Vagina (tissue), 2 donors: ENCODE measurements at regions of chr10 and their contacts with region 1.

Region 1: GRCh38 chr10:78819361-78820006 is 249.3 kb upstream of the ZMIZ1 start:
- DNase-seq: no peak
- H3K4me3 ChIP-seq: no peak overlapping the region
- H3K27ac ChIP-seq: no peak overlapping the region
- H3K4me1 ChIP-seq: peaks cover 10% of the 10 kb centered on the region
- H3K27me3 ChIP-seq: no peaks in the 10 kb centered on the region
- CTCF ChIP-seq: no peak
- POLR2A ChIP-seq: no peak

Region 2: GRCh38 chr10:78852466-78853240 is 33.2 kb after region 1 on chr10:
- intact Hi-C with region 1: loop called (anchors 2 kb)
- DNase-seq: no peak
- H3K4me3 ChIP-seq: no peak overlapping the region
- H3K27ac ChIP-seq: no peak overlapping the region
- H3K4me1 ChIP-seq: peaks cover 13% of the 10 kb centered on the region
- H3K27me3 ChIP-seq: no peaks in the 10 kb centered on the region
- CTCF ChIP-seq: no peak
- POLR2A ChIP-seq: no peak